ENCODE measurements at regions of chr2 and their contacts with region 1.

Region 1: DNA sequence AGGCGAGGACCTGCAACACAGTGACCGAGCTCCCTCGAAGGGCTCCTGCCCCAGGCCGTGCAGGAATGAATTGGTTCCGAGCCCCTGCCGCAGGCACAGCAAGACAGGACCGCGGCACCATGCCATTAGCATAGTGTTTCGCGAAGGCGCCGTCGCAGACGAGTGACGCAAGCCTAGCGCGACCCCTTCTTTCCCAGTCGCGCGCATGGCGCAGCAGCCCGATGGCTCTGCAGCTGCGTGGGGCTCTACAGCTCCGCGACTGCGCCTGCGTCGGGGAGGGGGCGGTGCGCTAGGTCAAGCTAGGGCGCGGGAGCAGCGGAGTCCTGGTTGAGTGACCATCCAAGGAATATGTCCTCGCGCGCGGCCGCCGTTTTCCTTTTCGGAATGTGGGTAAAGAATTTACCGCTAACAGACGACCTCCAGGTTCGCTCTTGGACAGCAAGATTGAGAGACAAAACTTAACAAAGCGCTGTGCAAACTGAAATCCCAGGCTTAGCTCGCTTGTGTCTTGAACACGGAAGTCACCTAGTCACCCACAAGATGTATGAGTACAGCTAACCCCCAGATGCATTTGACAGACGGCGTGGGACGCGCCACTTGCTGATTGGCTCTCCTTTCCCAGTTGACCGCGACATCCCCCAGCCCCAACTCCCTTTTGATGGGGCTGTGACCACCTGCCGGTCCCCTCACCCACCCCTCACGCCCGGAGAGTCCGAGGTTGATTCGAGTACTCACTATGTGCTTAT is at the start of gene TRMT61B:
- DNase-seq: peak; percentile 96 to 97
- ATAC-seq: peak; percentile 100
- H3K4me3 ChIP-seq: peak within 1 kb of the TSS; percentile 54 to 98 (median 94)
- H3K27ac ChIP-seq: peak within 1 kb of the TSS in 9 of 10 donors; percentile 62 to 88 (median 80)
- H3K4me1 ChIP-seq: peaks cover 5 to 40% (median 30%) of the 10 kb centered on the region in 9 donors
- H3K27me3 ChIP-seq: peaks cover 0 to 2% (median 0%) of the 10 kb centered on the region in 7 donors
- CTCF ChIP-seq: peak in 1 of 9 donors; percentile 9
- total RNA-seq, gene TRMT61B: 13.5 to 25.0 (median 17.5) TPM

Region 2: DNA sequence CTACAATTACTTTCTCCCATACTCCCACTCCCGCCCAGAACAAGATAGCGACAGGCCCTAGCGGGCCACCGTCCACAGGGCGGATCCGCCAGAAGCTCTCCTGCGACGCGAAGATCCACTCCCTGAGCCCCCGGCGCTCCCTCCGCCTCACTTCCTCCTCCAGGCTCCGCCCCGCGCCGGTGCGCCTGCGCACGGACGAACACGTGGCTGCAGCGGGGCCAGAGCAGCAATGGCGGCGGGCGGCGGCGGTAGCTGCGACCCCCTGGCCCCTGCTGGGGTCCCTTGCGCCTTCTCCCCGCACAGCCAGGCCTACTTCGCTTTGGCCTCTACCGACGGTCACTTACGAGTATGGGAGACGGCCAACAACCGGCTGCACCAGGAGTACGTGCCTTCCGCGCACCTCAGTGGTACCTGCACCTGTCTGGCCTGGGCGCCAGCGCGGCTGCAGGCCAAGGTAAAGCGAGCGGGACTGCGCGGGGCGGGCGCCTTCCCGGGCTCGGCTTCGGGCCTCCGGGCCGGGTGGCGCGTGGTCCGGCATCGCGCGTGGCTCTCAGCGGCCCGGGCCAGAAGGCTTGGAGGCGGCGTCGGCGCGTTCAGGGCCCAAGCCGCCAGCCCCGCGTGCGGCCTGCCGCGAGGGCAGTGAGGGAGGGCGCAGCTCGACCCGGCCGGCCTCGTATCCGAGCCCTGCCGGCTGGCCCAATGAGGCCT is 24.3 kb after region 1 on chr2 and contains the start of gene WDR43:
- intact Hi-C with region 1: loop called in 2 of 10 experiments (anchors 1 to 2 kb)
- DNase-seq: peak; percentile 97 to 98
- ATAC-seq: peak; percentile 99 to 100 (median 100)
- H3K4me3 ChIP-seq: peak within 1 kb of the TSS; percentile 81 to 99 (median 95)
- H3K27ac ChIP-seq: peak within 1 kb of the TSS; percentile 66 to 87 (median 82)
- H3K4me1 ChIP-seq: peaks cover 0 to 38% (median 31%) of the 10 kb centered on the region in 9 donors
- H3K27me3 ChIP-seq: no peaks in the 10 kb centered on the region
- CTCF ChIP-seq: no peak
- total RNA-seq, gene WDR43: 16.3 to 42.1 (median 25.9) TPM

Region 3: GRCh38 chr2:28904295-28904694 is 34.0 kb after region 1 on chr2:
- intact Hi-C with region 1: loop called in 1 of 10 experiments (anchors 1 kb)
- DNase-seq: no peak
- ATAC-seq: no peak
- H3K4me3 ChIP-seq: no peak overlapping the region
- H3K27ac ChIP-seq: no peak overlapping the region
- H3K4me1 ChIP-seq: peaks cover 0 to 19% (median 0%) of the 10 kb centered on the region in 9 donors
- H3K27me3 ChIP-seq: no peaks in the 10 kb centered on the region
- CTCF ChIP-seq: no peak

Region 4: GRCh38 chr2:28915939-28916338 is 45.6 kb after region 1 on chr2:
- intact Hi-C with region 1: no loop called
- DNase-seq: no peak
- ATAC-seq: no peak
- H3K4me3 ChIP-seq: no peak overlapping the region
- H3K27ac ChIP-seq: no peak overlapping the region
- H3K4me1 ChIP-seq: no peaks in the 10 kb centered on the region
- H3K27me3 ChIP-seq: no peaks in the 10 kb centered on the region
- CTCF ChIP-seq: no peak

Region 5: DNA sequence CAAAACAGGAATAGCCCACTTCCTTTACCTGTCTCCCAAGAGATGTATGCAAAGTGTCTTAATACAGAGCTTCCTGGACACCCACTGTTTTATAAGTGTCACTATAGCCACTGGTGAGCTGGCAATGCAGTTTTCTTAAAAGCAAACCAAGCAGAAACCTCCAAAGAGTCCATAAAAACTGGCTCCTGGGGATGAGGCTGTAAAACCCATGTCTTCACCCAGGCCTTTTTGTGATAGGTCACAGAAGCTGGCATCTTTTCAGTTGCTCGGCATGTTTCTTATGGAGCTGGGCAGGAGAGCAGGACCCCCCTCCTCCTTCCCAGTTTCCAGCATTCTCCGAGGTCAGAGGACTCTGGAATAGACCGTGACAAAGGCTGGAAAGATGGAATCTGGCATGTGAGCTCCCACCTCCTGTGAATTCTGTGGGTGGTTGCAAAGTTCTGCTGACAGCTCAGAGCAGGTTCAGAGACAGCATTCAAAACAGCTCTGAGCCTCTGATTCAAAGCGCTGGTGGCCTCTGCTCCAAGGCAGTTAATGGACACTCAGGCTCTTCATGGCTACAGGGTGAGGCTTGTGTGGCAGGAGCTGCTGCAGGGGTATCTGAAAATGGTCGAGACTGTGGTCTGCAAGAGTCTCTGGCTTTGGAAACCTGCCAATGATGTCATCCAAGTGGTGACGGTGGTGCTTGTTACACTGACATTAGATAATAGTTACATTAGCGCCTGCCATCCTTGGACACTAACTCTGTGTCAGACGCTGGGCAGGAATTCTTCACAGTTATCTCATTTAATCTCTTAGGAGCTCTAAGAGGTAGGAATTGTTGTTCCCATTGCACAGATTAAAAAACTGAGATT is 528.3 kb after region 1 on chr2:
- intact Hi-C with region 1: no loop called
- DNase-seq: no peak
- ATAC-seq: peak in 1 of 8 donors; percentile 31
- H3K4me3 ChIP-seq: no peak overlapping the region
- H3K27ac ChIP-seq: no peak overlapping the region
- H3K4me1 ChIP-seq: no peaks in the 10 kb centered on the region
- H3K27me3 ChIP-seq: peaks cover 0 to 18% (median 0%) of the 10 kb centered on the region in 7 donors
- CTCF ChIP-seq: no peak

Measured in heart right ventricle (tissue), 16 donors.